MCF 10A (cell line): ENCODE measurements at regions of chr3 and their contacts with region 1.

Region 1: GRCh38 chr3:71583566-71584449 is at the start of gene FOXP1:
- DNase-seq: peak; percentile 64
- H3K4me3 Mint-ChIP-seq: peak within 1 kb of the TSS; percentile 85
- H3K27ac Mint-ChIP-seq: peak within 1 kb of the TSS; percentile 97
- H3K4me1 Mint-ChIP-seq: peaks cover 13% of the 10 kb centered on the region
- H3K27me3 Mint-ChIP-seq: no peaks in the 10 kb centered on the region
- CTCF ChIP-seq: no peak
- total RNA-seq, gene FOXP1: 49.0 and 51.1 TPM in 2 replicates

Region 2: DNA sequence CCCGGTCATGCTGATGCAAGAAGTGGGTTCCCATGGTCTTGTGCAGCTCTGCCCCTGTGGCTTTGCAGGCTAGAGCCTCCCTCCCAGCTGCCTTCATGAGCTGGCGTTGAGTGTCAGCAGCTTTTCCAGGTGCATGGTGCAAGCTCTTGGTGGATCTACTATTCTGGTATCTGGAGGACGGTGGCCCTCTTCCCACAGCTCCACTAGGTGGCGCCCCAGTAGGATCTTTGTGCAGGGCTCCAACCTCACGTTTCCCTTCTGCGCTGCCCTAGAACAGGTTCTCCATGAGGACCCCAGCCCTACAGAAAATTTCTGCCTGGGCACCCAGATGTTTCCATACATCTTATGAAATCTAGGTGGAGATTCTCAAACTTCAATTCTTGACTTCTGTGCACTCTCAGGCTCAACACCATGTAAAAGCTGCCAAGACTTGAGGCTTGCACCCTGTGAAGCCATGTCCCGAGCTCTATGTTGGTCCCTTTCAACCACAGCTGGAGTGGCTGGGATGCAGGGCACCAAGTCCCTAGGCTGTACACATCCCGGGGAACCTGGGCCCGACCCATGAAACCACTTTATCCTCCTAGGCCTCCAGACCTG is 1033.0 kb before region 1 on chr3:
- CTCF ChIA-PET with region 1: interaction called, 7 read pairs
- POLR2A ChIA-PET with region 1: no interaction called
- intact Hi-C with region 1: loop called (anchors 2 kb)
- DNase-seq: peak; percentile 71
- H3K4me3 Mint-ChIP-seq: no peak overlapping the region
- H3K27ac Mint-ChIP-seq: no peak overlapping the region
- H3K4me1 Mint-ChIP-seq: no peaks in the 10 kb centered on the region
- H3K27me3 Mint-ChIP-seq: peaks cover 97% of the 10 kb centered on the region
- CTCF ChIP-seq: peak; percentile 72

Region 3: DNA sequence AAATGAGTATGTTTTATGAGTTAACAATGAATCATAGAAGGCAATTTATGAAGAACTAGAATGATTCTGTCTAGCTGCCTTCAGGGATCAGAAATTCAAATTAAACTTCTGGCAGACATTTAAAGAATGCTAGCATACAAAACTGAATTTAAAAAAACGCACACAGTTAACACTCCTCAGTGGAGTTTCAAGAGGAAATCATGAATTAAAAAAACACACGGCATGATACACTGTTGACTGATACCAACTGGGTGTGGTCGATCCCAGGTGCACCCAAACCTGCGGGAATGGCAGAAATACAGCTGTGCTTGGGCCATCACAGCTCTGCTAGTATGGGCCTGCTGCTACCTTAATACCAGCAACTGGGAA is 526.3 kb before region 1 on chr3:
- CTCF ChIA-PET with region 1: interaction called, 16 read pairs
- POLR2A ChIA-PET with region 1: interaction called, 219 read pairs
- intact Hi-C with region 1: no loop called
- DNase-seq: peak; percentile 66
- H3K4me3 Mint-ChIP-seq: peak overlapping the region; percentile 63
- H3K27ac Mint-ChIP-seq: peak overlapping the region; percentile 94
- H3K4me1 Mint-ChIP-seq: peaks cover 72% of the 10 kb centered on the region
- H3K27me3 Mint-ChIP-seq: no peaks in the 10 kb centered on the region
- CTCF ChIP-seq: no peak

Region 4: GRCh38 chr3:71210257-71211007 is 373.4 kb before region 1 on chr3:
- CTCF ChIA-PET with region 1: no interaction called
- POLR2A ChIA-PET with region 1: interaction called, 8 read pairs
- intact Hi-C with region 1: loop called (anchors 10 kb)
- DNase-seq: peak; percentile 82
- H3K4me3 Mint-ChIP-seq: peak overlapping the region; percentile 34
- H3K27ac Mint-ChIP-seq: peak overlapping the region; percentile 93
- H3K4me1 Mint-ChIP-seq: peaks cover 25% of the 10 kb centered on the region
- H3K27me3 Mint-ChIP-seq: no peaks in the 10 kb centered on the region
- CTCF ChIP-seq: no peak

Region 5: DNA sequence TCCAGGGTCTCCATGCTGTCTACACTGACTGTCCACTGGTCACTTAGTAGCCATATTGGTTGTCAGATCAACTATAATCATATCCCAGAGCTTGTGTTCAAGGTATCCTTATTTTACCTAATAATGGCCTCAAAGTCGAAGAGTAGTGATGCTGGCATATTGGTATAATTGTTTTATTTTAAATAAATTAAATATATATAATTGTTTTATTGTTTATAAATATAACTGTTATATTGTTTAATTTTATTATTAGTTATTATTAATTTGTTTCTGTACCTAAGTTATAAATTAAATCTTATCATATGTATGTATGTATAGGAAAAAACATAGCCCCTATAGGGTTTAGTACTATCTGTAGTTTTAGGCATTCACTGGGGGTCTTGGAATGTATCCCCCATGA is 205.3 kb before region 1 on chr3:
- CTCF ChIA-PET with region 1: no interaction called
- POLR2A ChIA-PET with region 1: no interaction called
- intact Hi-C with region 1: no loop called
- DNase-seq: no peak
- H3K4me3 Mint-ChIP-seq: no peak overlapping the region
- H3K27ac Mint-ChIP-seq: no peak overlapping the region
- H3K4me1 Mint-ChIP-seq: no peaks in the 10 kb centered on the region
- H3K27me3 Mint-ChIP-seq: no peaks in the 10 kb centered on the region
- CTCF ChIP-seq: no peak

Region 6: DNA sequence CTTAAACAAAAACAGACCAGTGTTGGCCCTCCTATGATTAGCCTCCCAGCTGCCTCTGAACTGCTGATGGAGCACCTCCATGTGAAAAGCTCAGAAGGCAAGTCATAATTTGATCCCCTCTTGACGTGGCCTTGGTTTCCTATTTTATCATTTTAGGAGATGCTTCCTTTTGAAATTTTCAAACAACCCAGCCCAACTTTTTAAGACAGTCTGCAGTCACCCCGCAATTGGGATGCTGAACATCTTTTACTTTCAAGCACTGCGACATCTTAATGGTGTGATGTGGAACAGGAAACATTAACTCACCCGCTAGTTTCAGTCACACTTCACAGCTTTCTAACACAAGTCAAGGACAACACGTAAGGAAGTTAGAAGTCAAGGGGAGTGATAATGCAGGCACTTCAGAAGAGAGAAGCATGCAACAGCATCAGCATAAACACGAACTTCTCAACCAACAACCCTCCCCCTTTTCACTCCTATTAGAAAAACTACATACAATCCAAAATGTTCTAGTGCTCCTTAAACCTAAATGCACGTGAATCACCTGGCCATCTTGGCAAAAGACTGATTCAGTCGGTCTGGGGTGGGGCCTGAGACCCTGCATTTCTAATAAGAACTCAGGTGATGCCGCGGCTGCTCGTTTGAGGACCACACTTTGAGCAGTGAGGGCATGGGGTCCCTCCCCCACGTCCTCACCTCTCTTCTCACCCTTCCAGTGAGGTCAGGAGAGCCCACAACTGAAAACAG is 161.8 kb before region 1 on chr3:
- CTCF ChIA-PET with region 1: interaction called, 10 read pairs
- POLR2A ChIA-PET with region 1: interaction called, 14 read pairs
- intact Hi-C with region 1: loop called (anchors 1 kb)
- DNase-seq: no peak
- H3K4me3 Mint-ChIP-seq: no peak overlapping the region
- H3K27ac Mint-ChIP-seq: peak overlapping the region; percentile 76
- H3K4me1 Mint-ChIP-seq: peaks cover 46% of the 10 kb centered on the region
- H3K27me3 Mint-ChIP-seq: no peaks in the 10 kb centered on the region
- CTCF ChIP-seq: no peak

Region 7: GRCh38 chr3:71504250-71505036 is 79.4 kb before region 1 on chr3:
- CTCF ChIA-PET with region 1: interaction called, 6 read pairs
- POLR2A ChIA-PET with region 1: interaction called, 36 read pairs
- intact Hi-C with region 1: loop called (anchors 1 kb)
- DNase-seq: peak; percentile 88
- H3K4me3 Mint-ChIP-seq: peak overlapping the region; percentile 72
- H3K27ac Mint-ChIP-seq: peak overlapping the region; percentile 95
- H3K4me1 Mint-ChIP-seq: peaks cover 36% of the 10 kb centered on the region
- H3K27me3 Mint-ChIP-seq: no peaks in the 10 kb centered on the region
- CTCF ChIP-seq: no peak

Region 8: GRCh38 chr3:71521940-71522876 is 61.6 kb before region 1 on chr3:
- CTCF ChIA-PET with region 1: no interaction called
- POLR2A ChIA-PET with region 1: no interaction called
- intact Hi-C with region 1: no loop called
- DNase-seq: no peak
- H3K4me3 Mint-ChIP-seq: no peak overlapping the region
- H3K27ac Mint-ChIP-seq: peak overlapping the region; percentile 32
- H3K4me1 Mint-ChIP-seq: peaks cover 21% of the 10 kb centered on the region
- H3K27me3 Mint-ChIP-seq: no peaks in the 10 kb centered on the region
- CTCF ChIP-seq: no peak

Region 9: DNA sequence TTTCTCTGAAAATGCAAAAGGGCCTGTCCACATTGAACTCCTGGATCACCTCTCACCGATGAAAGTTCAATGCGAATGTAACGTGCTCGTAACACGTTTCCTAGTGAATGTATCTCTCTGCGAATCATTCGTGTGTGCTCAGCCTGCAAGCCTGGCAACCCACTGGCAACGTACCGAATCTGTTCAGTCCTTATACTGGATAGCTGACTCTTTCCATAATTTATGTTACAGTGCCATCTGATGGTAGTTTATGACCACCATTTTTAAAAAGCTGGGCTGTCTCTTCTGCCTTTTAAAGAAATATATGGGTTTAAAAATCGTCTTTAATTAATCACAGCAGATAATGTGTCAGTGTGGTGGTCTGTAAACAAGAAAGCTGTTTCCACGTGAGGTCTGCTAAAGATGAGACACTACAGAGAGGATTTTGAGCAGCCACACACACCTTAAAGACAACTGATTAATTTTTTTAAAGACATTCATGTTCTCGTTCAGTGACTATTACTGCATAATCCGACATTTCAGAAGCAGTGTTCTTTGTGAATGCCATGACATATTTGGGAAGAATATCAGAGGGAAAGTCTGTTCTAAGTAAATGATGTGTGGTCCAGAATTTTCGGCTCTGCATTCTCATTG is 69.1 kb after region 1 on chr3:
- CTCF ChIA-PET with region 1: interaction called, 5 read pairs
- POLR2A ChIA-PET with region 1: interaction called, 3 read pairs
- intact Hi-C with region 1: loop called (anchors 5 kb)
- DNase-seq: peak; percentile 34
- H3K4me3 Mint-ChIP-seq: no peak overlapping the region
- H3K27ac Mint-ChIP-seq: no peak overlapping the region
- H3K4me1 Mint-ChIP-seq: peaks cover 11% of the 10 kb centered on the region
- H3K27me3 Mint-ChIP-seq: no peaks in the 10 kb centered on the region
- CTCF ChIP-seq: peak; percentile 66